ENCODE measurements at regions of chr6 and their contacts with region 1.

Region 1: DNA sequence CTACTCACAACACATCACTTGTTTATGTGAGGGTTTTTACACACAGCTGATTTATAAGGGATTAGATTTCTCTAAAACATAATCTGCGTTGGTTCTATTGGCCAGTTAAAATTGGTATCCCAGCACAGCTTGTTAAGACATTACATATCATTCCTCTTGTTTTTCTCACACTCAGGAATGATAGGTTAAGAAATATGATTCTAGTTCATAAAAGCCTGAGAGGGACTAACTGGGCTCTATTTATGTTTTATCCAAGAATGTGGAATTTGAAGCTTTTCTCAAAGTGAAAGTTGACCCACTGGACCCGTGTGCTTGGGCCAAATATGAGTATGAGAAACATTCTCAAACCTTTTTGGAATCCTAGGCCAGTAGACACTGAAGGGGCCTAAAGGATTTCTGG is 117.3 kb downstream of the TMEM170B start:
- DNase-seq: no peak
- H3K4me3 ChIP-seq: no peak overlapping the region
- H3K27ac ChIP-seq: no peak overlapping the region
- H3K4me1 ChIP-seq: no peaks in the 10 kb centered on the region
- H3K27me3 ChIP-seq: no peaks in the 10 kb centered on the region
- CTCF ChIP-seq: no peak
- POLR2A ChIP-seq: no peak

Region 2: GRCh38 chr6:12233693-12234571 is 579.1 kb after region 1 on chr6:
- intact Hi-C with region 1: loop called (anchors 5 kb)
- DNase-seq: peak in 1 of 2 donors; percentile 27
- H3K4me3 ChIP-seq: no peak overlapping the region
- H3K27ac ChIP-seq: no peak overlapping the region
- H3K4me1 ChIP-seq: no peaks in the 10 kb centered on the region
- H3K27me3 ChIP-seq: no peaks in the 10 kb centered on the region
- CTCF ChIP-seq: peak; percentile 56 to 88 (median 72)
- POLR2A ChIP-seq: no peak

Measured in uterus (tissue), 4 donors.